Gastrocnemius medialis (tissue), 4 donors: ENCODE measurements at regions of chr4 and their contacts with region 1.

Region 1: GRCh38 chr4:88523325-88524129 is at the start of gene PYURF:
- DNase-seq: peak; percentile 91 to 93
- ATAC-seq: peak; percentile 89 to 96
- H3K4me3 ChIP-seq: peak within 1 kb of the TSS; percentile 86 to 96 (median 90)
- H3K27ac ChIP-seq: peak within 1 kb of the TSS; percentile 88 to 98 (median 92)
- H3K4me1 ChIP-seq: peaks cover 26 to 35% of the 10 kb centered on the region in 2 donors
- H3K27me3 ChIP-seq: no peaks in the 10 kb centered on the region
- CTCF ChIP-seq: no peak
- POLR2A ChIP-seq: peak; percentile 87
- total RNA-seq, gene PYURF: 62.4 to 86.0 (median 72.3) TPM

Region 2: GRCh38 chr4:86934771-86935565 is 1588.6 kb before region 1 on chr4 and contains the start of gene AFF1:
- in situ Hi-C with region 1: no loop called
- intact Hi-C with region 1: loop called (anchors 5 kb)
- DNase-seq: peak; percentile 92 to 96
- ATAC-seq: peak; percentile 70 to 79
- H3K4me3 ChIP-seq: peak within 1 kb of the TSS; percentile 79 to 97 (median 82)
- H3K27ac ChIP-seq: peak within 1 kb of the TSS; percentile 93 to 99 (median 96)
- H3K4me1 ChIP-seq: peaks cover 29 to 47% of the 10 kb centered on the region in 2 donors
- H3K27me3 ChIP-seq: no peaks in the 10 kb centered on the region
- CTCF ChIP-seq: peak; percentile 7 to 87 (median 58)
- POLR2A ChIP-seq: peak; percentile 97
- total RNA-seq, gene AFF1: 142 to 265 (median 197) TPM

Region 3: GRCh38 chr4:88033309-88033708 is 490.2 kb before region 1 on chr4:
- in situ Hi-C with region 1: loop called (anchors 10 to 25 kb)
- intact Hi-C with region 1: loop called (anchors 10 kb)
- DNase-seq: no peak
- ATAC-seq: peak in 1 of 2 donors; percentile 64
- H3K4me3 ChIP-seq: no peak overlapping the region
- H3K27ac ChIP-seq: no peak overlapping the region
- H3K4me1 ChIP-seq: no peaks in the 10 kb centered on the region
- H3K27me3 ChIP-seq: no peaks in the 10 kb centered on the region
- CTCF ChIP-seq: peak in 4 of 5 experiments; percentile 24 to 70 (median 56)
- POLR2A ChIP-seq: no peak

Region 4: GRCh38 chr4:88378691-88379559 is 144.6 kb before region 1 on chr4 and contains the start of gene HERC6:
- in situ Hi-C with region 1: loop called in 1 of 4 experiments (anchors 10 kb)
- intact Hi-C with region 1: loop called (anchors 5 kb)
- DNase-seq: peak; percentile 25 to 59
- ATAC-seq: peak; percentile 90 to 92
- H3K4me3 ChIP-seq: peak within 1 kb of the TSS; percentile 81 to 99 (median 96)
- H3K27ac ChIP-seq: peak within 1 kb of the TSS; percentile 71 to 88 (median 81)
- H3K4me1 ChIP-seq: no peaks in the 10 kb centered on the region
- H3K27me3 ChIP-seq: no peaks in the 10 kb centered on the region
- CTCF ChIP-seq: peak; percentile 47 to 77 (median 60)
- POLR2A ChIP-seq: no peak
- total RNA-seq, gene HERC6: 0.42 to 1.6 (median 1.0) TPM

Region 5: DNA sequence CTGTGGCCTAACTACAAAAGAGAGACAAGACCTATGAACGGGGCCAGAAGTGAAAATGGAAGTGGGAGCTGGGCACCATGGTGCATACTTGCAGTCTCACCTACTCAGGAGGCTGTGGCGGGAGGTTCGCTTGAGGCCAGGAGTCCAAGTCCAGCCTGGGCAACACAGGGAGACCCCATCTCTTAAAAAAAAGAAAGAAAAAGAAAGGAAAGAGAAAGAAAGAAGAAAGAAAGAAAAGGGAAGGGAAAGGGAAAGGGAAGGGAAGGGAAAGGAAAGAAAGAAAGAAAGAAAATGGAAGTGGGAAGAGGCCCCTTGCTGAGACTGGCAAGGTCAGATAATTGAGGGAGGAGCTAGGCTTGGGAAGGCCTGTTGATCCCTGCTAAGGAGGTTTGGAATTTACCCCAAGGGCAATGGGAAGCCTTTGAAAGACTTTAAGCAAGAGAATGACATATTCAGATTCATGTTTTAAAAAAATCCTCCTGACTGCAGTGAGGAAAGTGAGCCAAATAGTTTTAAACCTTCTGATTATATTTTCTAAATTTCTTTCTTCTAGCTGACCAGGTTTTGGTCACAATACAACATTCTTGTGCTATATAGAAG is 84.3 kb before region 1 on chr4:
- in situ Hi-C with region 1: no loop called
- intact Hi-C with region 1: no loop called
- DNase-seq: no peak
- ATAC-seq: no peak
- H3K4me3 ChIP-seq: no peak overlapping the region
- H3K27ac ChIP-seq: no peak overlapping the region
- H3K4me1 ChIP-seq: no peaks in the 10 kb centered on the region
- H3K27me3 ChIP-seq: no peaks in the 10 kb centered on the region
- CTCF ChIP-seq: no peak
- POLR2A ChIP-seq: no peak

Region 6: DNA sequence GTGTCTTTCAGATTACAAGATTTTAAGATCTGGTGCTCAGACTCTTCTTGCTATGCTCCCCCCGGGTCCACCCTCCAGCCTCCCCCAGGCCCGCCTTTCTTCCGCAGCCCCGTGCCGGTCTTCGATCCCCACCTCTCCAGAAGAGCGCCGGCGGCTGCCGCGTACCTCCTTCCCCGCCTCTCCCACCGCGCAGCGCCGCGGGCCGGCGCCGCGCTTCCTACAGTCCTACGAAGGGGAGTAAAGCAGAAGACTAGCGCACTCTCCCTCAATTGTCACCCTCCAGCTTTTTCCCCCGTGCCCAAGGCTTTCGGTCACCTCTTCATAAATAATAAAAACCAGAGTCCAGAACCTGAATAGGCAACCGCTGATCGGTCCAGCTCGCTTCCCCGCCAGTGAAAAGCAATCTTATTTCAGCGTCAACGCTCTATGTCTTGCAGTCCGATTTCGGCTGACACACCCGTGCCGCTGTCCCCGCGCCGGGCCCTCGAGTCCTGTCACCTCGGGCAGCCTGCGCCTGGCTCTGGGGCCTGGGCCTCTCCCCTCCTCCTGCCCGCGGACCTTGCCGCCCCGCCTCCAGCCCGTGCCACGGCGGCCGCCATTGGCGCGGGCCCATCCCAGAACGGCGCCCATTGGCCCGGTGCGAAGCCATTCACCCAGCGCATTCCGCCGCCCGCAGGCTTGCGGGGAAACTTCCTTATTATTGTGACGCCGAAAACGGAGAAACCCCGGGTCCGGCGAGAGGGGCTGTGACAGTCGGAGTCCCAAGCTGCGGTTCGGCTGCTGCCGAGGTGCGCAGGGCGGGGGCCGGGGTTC is 68.5 kb after region 1 on chr4 and contains the start of gene HERC3:
- in situ Hi-C with region 1: no loop called
- intact Hi-C with region 1: loop called (anchors 1 kb)
- DNase-seq: peak; percentile 87 to 92
- ATAC-seq: peak; percentile 86 to 91
- H3K4me3 ChIP-seq: peak within 1 kb of the TSS; percentile 72 to 91 (median 82)
- H3K27ac ChIP-seq: peak within 1 kb of the TSS; percentile 91 to 95 (median 92)
- H3K4me1 ChIP-seq: peaks cover 18 to 26% of the 10 kb centered on the region in 2 donors
- H3K27me3 ChIP-seq: no peaks in the 10 kb centered on the region
- CTCF ChIP-seq: peak in 2 of 5 experiments; percentile 26 to 34
- POLR2A ChIP-seq: peak; percentile 59 to 68
- total RNA-seq, gene HERC3: 16.2 to 32.3 (median 21.9) TPM

Region 7: GRCh38 chr4:89029591-89029990 is 506.1 kb after region 1 on chr4:
- in situ Hi-C with region 1: loop called in 1 of 4 experiments (anchors 25 kb)
- intact Hi-C with region 1: no loop called
- DNase-seq: no peak
- ATAC-seq: no peak
- H3K4me3 ChIP-seq: no peak overlapping the region
- H3K27ac ChIP-seq: no peak overlapping the region
- H3K4me1 ChIP-seq: peaks cover 0 to 5% of the 10 kb centered on the region in 2 donors
- H3K27me3 ChIP-seq: no peaks in the 10 kb centered on the region
- CTCF ChIP-seq: no peak
- POLR2A ChIP-seq: no peak